Activated naive CD4-positive, alpha-beta T cell treated with anti-CD3 and anti-CD28 coated beads for 36 hours (primary cell): ENCODE measurements at regions of chr1 and their contacts with region 1.

Region 1: GRCh38 chr1:172671591-172671990 is 12.7 kb downstream of the FASLG start:
- DNase-seq: no peak
- H3K4me3 Mint-ChIP-seq: no peak overlapping the region
- H3K27ac Mint-ChIP-seq: no peak overlapping the region
- H3K4me1 Mint-ChIP-seq: peaks cover 70% of the 10 kb centered on the region
- H3K27me3 Mint-ChIP-seq: no peaks in the 10 kb centered on the region

Region 2: GRCh38 chr1:171566467-171566866 is 1105.1 kb before region 1 on chr1:
- CTCF ChIA-PET with region 1: no interaction called
- intact Hi-C with region 1: no loop called
- DNase-seq: no peak
- H3K4me3 Mint-ChIP-seq: no peak overlapping the region
- H3K27ac Mint-ChIP-seq: no peak overlapping the region
- H3K4me1 Mint-ChIP-seq: peaks cover 12% of the 10 kb centered on the region
- H3K27me3 Mint-ChIP-seq: no peaks in the 10 kb centered on the region

Region 3: DNA sequence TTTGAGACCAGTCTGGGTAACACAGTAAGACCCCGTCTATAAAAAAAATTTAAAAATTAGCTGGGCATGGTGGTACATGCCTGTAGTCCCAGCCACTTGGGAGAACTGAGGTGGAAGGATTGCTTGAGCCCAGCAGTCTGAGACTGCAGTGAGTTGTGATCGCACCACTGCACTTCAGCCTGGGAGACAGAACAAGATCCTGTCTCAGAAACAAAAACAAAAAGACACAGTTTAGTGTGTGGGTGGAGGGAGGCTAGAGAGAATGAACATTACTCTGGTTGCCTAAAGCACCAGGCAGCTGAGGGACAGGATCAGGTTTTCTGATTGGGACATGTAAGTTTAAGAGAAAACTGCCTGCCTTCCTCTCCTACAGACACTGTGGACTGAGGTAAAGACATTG is 972.1 kb before region 1 on chr1:
- CTCF ChIA-PET with region 1: no interaction called
- intact Hi-C with region 1: no loop called
- DNase-seq: no peak
- H3K4me3 Mint-ChIP-seq: no peak overlapping the region
- H3K27ac Mint-ChIP-seq: no peak overlapping the region
- H3K4me1 Mint-ChIP-seq: no peaks in the 10 kb centered on the region
- H3K27me3 Mint-ChIP-seq: no peaks in the 10 kb centered on the region

Region 4: GRCh38 chr1:172278478-172278877 is 393.1 kb before region 1 on chr1:
- CTCF ChIA-PET with region 1: no interaction called
- intact Hi-C with region 1: loop called (anchors 10 kb)
- DNase-seq: no peak
- H3K4me3 Mint-ChIP-seq: no peak overlapping the region
- H3K27ac Mint-ChIP-seq: no peak overlapping the region
- H3K4me1 Mint-ChIP-seq: peaks cover 13% of the 10 kb centered on the region
- H3K27me3 Mint-ChIP-seq: no peaks in the 10 kb centered on the region

Region 5: DNA sequence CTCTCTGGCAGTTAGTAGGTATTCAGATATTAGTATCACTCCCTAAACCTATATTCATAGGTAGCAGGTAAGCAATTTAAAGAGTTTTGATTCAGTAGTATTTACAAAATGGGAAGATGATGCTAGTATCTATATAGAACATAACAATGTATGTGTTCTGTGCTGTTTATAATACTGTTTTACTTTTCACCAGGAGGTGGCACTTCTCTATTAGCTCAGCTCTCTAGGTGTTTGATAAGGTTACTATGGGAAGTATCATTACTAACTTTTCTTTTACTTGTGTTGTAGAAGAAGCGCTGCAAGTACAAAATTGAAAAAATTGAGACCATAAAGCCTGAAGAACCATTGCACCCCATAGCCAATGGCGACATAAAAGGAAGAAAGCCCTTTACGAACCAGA is 62.1 kb before region 1 on chr1:
- CTCF ChIA-PET with region 1: interaction called, 4 read pairs
- intact Hi-C with region 1: loop called (anchors 2 kb)
- DNase-seq: no peak
- H3K4me3 Mint-ChIP-seq: no peak overlapping the region
- H3K27ac Mint-ChIP-seq: no peak overlapping the region
- H3K4me1 Mint-ChIP-seq: peaks cover 2% of the 10 kb centered on the region
- H3K27me3 Mint-ChIP-seq: no peaks in the 10 kb centered on the region

Region 6: DNA sequence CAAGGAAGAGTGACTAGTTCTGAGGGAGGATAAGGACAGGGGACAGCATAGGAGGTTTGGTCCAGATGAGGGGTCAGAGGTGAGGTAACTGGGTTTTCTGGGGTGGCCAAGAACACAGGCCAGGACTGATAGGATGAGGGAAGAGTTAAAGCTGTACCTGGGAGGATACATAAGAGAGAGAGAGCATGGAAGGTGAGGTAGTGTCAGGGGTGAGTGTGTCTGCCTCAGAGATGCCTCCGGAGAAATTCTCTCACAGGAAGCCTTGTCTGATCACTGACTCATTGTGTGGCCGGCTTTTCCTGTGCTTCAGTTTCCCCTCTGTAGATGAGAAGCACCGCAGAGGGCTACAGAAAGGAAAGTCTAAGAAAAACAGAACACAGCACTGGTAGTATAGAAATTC is 27.5 kb after region 1 on chr1:
- CTCF ChIA-PET with region 1: interaction called, 10 read pairs
- intact Hi-C with region 1: loop called (anchors 1 kb)
- DNase-seq: peak; percentile 88
- H3K4me3 Mint-ChIP-seq: peak overlapping the region; percentile 36
- H3K27ac Mint-ChIP-seq: peak overlapping the region; percentile 89
- H3K4me1 Mint-ChIP-seq: peaks cover 53% of the 10 kb centered on the region
- H3K27me3 Mint-ChIP-seq: no peaks in the 10 kb centered on the region

Region 7: DNA sequence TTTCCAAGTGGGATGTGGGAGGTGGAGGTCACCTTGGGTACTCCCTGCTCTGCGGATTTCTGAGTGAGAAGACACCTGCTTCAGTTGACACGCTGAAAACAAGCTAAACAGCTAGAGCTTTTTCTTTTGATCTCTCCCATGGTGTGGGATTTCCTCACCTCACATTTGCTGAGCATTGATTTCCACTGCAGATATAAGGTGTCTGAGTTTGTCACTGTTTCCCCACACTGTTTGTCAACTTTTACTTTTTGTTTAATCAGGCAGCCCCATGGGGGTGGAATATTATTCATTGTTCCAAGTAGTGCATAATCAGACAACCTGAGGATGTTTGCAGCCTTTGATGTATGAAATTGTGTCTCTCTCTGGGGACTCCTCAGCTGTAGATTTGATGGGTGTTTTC is 36.9 kb after region 1 on chr1:
- CTCF ChIA-PET with region 1: no interaction called
- intact Hi-C with region 1: loop called (anchors 1 kb)
- DNase-seq: peak; percentile 55
- H3K4me3 Mint-ChIP-seq: no peak overlapping the region
- H3K27ac Mint-ChIP-seq: no peak overlapping the region
- H3K4me1 Mint-ChIP-seq: peaks cover 24% of the 10 kb centered on the region
- H3K27me3 Mint-ChIP-seq: no peaks in the 10 kb centered on the region